ENCODE measurements at regions of chr1 and their contacts with region 1.

Region 1: GRCh38 chr1:225644666-225645065 is 8.3 kb downstream of the ENAH start:
- DNase-seq: peak; percentile 65
- ATAC-seq: peak; percentile 33; the same call in 1 of the 2 replicates
- H3K4me3 ChIP-seq: no peak overlapping the region
- H3K27ac ChIP-seq: peak overlapping the region; percentile 32; the same call in 1 of the 2 replicates
- H3K4me1 ChIP-seq: peaks cover 6% of the 10 kb centered on the region
- H3K27me3 ChIP-seq: no peaks in the 10 kb centered on the region
- CTCF ChIP-seq: no peak
- POLR2A ChIP-seq: no peak
- RAD21 ChIP-seq: no peak

Region 2: DNA sequence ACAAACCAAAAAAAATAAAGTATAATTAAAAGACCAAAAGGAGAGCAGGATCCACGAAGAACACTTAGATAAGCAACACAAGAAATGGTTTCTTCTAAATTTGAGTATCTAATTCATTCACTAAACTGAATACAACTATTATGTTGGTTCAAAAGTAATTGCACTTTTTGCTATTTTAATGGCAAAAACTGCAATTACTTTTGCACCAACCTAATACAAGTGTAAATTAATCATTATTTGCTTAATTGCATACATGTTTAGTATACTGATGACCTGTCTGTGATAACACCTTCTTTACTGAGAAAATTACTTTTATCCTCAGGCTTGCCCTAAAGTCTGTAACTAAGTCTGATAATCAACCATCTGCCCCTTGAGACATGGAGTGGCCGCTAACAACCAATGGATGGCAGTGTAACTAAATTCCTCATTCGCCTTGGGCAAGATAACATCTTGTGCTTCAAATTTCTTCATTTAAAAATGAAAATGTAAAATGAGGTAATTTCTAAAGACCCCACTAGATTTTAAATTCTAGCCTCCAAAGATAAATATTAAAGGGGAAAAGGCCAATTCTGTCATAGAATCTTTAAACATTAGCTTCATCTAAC is 77.0 kb before region 1 on chr1:
- CTCF ChIA-PET with region 1: no interaction called
- POLR2A ChIA-PET with region 1: no interaction called
- dilution Hi-C with region 1: no loop called
- in situ Hi-C with region 1: no loop called
- intact Hi-C with region 1: loop called (anchors 5 kb)
- DNase-seq: no peak
- ATAC-seq: no peak
- H3K4me3 ChIP-seq: no peak overlapping the region
- H3K27ac ChIP-seq: no peak overlapping the region
- H3K4me1 ChIP-seq: peaks cover 1% of the 10 kb centered on the region; the same call in 1 of the 2 replicates
- H3K27me3 ChIP-seq: no peaks in the 10 kb centered on the region
- CTCF ChIP-seq: 0 out of 2 replicates have a peak, but pooled peaks have one; percentile 14
- POLR2A ChIP-seq: no peak
- RAD21 ChIP-seq: no peak